ENCODE measurements at regions of chr7 and their contacts with region 1.

Region 1: GRCh38 chr7:21507626-21508343 is 35.1 kb upstream of the DNAH11 start:
- DNase-seq: peak in 1 of 2 donors; percentile 19
- ATAC-seq: peak in 3 of 4 donors; percentile 63 to 86 (median 68)
- H3K4me3 ChIP-seq: no peak overlapping the region
- H3K27ac ChIP-seq: no peak overlapping the region
- H3K4me1 ChIP-seq: no peaks in the 10 kb centered on the region
- H3K27me3 ChIP-seq: no peaks in the 10 kb centered on the region
- CTCF ChIP-seq: peak; percentile 79

Region 2: DNA sequence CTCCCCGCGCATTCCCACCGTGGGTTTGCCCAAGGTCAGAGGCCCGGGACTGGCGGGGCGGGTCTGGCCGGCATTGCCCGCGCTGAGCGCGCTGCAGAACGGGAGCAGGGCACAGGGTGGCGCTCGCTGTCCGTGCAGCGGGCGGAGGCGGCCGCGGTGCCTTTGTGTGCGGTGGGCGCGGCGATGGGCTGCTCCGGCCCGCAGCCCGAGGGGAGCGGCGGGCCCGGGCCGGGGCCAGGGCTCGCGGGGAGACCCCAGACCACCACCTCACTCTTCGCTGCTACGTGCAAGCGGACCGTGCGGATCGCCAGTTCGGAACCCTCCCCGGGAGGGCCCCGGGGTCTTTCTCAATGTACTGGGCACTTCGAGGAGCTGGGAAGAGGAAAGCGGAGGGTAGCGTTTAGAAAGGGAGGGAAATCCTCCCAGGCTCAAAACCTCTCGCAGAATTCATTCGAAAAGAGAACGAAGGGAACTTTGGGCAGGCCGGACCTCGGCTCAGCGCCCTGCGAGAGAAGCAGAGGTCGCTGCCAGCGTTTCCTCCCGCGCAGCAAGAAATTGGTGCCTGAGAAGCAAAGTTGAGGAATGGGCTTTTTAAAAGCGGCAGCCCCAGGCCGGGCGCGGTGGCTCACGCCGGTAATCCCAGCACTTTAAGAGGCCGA is 729.6 kb before region 1 on chr7:
- intact Hi-C with region 1: loop called in 1 of 2 experiments (anchors 5 kb)
- DNase-seq: peak in 1 of 2 donors; percentile 16
- ATAC-seq: peak; percentile 72 to 84 (median 79)
- H3K4me3 ChIP-seq: peak overlapping the region; percentile 54
- H3K27ac ChIP-seq: no peak overlapping the region
- H3K4me1 ChIP-seq: no peaks in the 10 kb centered on the region
- H3K27me3 ChIP-seq: peaks cover 16 to 100% (median 29%) of the 10 kb centered on the region in 3 donors
- CTCF ChIP-seq: peak; percentile 51

Region 3: DNA sequence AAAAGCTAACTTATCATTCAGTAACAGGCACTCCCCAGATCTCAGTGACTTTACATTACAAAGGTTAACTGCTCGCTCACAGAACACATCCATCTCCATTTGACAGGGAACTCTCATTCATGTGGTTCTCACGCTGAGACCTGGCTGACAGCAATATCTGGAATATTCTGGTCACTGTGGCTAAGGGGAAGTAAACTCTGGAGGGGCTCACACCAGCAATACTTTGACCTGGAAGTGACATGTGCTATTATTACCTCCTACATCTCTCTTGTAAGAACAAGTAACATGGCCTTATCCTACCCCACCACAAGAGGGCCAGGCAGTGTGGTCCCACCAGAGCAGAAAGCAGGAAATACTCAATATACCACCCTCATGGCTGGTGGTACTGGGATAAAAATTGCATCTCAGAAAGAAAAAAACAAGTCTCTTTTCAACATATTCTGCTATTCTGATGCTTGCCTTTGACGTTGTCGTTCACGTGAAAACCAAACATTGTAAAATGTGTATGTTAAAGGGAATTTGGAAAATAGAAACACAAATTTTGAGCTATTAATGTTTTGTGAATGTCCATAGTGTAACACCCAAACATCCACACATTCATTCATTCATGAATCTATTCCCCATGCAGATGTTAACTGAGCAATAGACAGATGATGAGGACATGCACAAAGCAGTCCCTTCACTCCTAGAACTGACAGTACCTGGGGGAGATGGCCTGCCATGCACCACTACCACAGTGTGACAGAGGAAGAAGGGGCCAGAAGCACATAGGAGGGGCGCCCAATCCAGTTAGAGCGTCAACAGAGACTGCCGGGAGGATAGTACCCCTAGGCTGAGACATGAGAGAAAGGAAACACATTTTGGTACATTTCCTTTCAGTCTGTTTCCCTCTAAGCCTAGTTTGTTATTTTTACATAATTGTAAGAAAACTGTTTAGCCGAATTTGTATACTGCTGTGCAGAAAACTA is 245.9 kb before region 1 on chr7:
- intact Hi-C with region 1: loop called (anchors 2 kb)
- DNase-seq: peak in 1 of 2 donors; percentile 12
- ATAC-seq: peak in 1 of 4 donors; percentile 48
- H3K4me3 ChIP-seq: no peak overlapping the region
- H3K27ac ChIP-seq: no peak overlapping the region
- H3K4me1 ChIP-seq: no peaks in the 10 kb centered on the region
- H3K27me3 ChIP-seq: peaks cover 0 to 2% (median 0%) of the 10 kb centered on the region in 3 donors
- CTCF ChIP-seq: peak; percentile 37

Region 4: GRCh38 chr7:21427182-21427870 is 80.5 kb before region 1 on chr7:
- intact Hi-C with region 1: loop called in 1 of 2 experiments (anchors 10 kb)
- DNase-seq: peak; percentile 99
- ATAC-seq: peak; percentile 93 to 95 (median 93)
- H3K4me3 ChIP-seq: peak overlapping the region; percentile 86
- H3K27ac ChIP-seq: peak overlapping the region; percentile 97
- H3K4me1 ChIP-seq: peaks cover 38% of the 10 kb centered on the region
- H3K27me3 ChIP-seq: no peaks in the 10 kb centered on the region
- CTCF ChIP-seq: peak; percentile 22

Region 5: GRCh38 chr7:21851559-21851967 is 343.8 kb after region 1 on chr7:
- intact Hi-C with region 1: no loop called
- DNase-seq: no peak
- ATAC-seq: no peak
- H3K4me3 ChIP-seq: no peak overlapping the region
- H3K27ac ChIP-seq: no peak overlapping the region
- H3K4me1 ChIP-seq: no peaks in the 10 kb centered on the region
- H3K27me3 ChIP-seq: no peaks in the 10 kb centered on the region
- CTCF ChIP-seq: no peak

Measured in psoas muscle (tissue), 8 donors.